ENCODE measurements at regions of chr16 and their contacts with region 1.

Region 1: GRCh38 chr16:31142109-31143010 is 6.8 kb upstream of the PRSS8 start:
- DNase-seq: peak; percentile 95 to 100
- H3K4me3 ChIP-seq: peak overlapping the region; percentile 52
- H3K27ac ChIP-seq: peak overlapping the region; percentile 69
- H3K4me1 ChIP-seq: peaks cover 39% of the 10 kb centered on the region
- H3K27me3 ChIP-seq: no peaks in the 10 kb centered on the region
- CTCF ChIP-seq: peak; percentile 93

Region 2: DNA sequence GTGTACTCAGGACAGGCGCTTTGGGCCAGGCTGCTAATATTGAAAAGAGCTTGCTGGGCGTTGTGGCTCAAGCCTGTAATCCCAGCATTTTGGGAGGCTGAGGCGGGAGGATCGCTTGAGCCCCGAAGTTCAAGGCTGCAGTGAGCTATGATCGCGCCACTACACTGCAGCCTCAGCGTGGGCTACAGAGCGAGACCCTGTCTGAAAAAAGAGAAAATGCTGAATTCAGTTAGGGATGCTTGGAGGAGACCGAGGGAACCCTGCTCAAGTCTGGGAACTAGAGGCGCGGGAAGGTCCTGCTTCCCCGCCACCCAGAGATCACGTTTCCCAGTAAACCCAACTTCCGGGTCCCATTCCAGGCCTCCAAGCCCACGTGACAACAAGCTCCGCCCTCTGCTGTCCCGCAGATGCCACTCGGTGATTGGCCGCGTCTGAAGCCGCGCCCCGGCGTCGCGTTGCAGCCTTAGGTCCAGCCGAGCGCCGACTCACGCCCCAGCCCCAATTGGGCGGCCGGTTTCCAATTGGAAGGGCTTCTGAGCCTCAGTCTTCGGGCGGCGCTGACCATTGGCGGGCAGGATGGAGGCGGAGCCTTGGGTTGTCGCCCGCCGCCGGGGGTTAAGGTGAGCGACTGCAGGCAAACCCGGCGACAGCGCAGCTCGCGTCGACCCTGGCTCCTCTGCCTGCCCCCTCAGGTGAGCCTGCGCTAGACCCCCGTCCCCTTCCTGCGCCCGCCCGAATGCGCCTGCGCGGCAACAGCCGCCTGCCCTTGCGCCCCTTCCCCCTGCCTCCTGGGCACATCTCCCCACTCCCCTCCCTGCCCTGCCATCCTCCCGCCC is 394.3 kb before region 1 on chr16 and contains the start of gene PHKG2:
- CTCF ChIA-PET with region 1: no interaction called
- POLR2A ChIA-PET with region 1: no interaction called
- intact Hi-C with region 1: no loop called
- DNase-seq: peak; percentile 98 to 100
- H3K4me3 ChIP-seq: peak within 1 kb of the TSS; percentile 75
- H3K27ac ChIP-seq: peak within 1 kb of the TSS; percentile 53
- H3K4me1 ChIP-seq: peaks cover 13% of the 10 kb centered on the region
- H3K27me3 ChIP-seq: no peaks in the 10 kb centered on the region
- CTCF ChIP-seq: no peak
- total RNA-seq, gene PHKG2: 66.1 and 67.3 TPM in 2 replicates

Region 3: GRCh38 chr16:30957456-30958174 is 184.7 kb before region 1 on chr16 and contains the start of gene SETD1A:
- CTCF ChIA-PET with region 1: interaction called, 3 read pairs
- POLR2A ChIA-PET with region 1: interaction called, 16 read pairs
- intact Hi-C with region 1: no loop called
- DNase-seq: peak; percentile 86 to 96
- H3K4me3 ChIP-seq: peak within 1 kb of the TSS; percentile 97
- H3K27ac ChIP-seq: peak within 1 kb of the TSS; percentile 82
- H3K4me1 ChIP-seq: peaks cover 9% of the 10 kb centered on the region
- H3K27me3 ChIP-seq: no peaks in the 10 kb centered on the region
- CTCF ChIP-seq: no peak
- total RNA-seq, gene SETD1A: 29.6 and 33.2 TPM in 2 replicates

Region 4: DNA sequence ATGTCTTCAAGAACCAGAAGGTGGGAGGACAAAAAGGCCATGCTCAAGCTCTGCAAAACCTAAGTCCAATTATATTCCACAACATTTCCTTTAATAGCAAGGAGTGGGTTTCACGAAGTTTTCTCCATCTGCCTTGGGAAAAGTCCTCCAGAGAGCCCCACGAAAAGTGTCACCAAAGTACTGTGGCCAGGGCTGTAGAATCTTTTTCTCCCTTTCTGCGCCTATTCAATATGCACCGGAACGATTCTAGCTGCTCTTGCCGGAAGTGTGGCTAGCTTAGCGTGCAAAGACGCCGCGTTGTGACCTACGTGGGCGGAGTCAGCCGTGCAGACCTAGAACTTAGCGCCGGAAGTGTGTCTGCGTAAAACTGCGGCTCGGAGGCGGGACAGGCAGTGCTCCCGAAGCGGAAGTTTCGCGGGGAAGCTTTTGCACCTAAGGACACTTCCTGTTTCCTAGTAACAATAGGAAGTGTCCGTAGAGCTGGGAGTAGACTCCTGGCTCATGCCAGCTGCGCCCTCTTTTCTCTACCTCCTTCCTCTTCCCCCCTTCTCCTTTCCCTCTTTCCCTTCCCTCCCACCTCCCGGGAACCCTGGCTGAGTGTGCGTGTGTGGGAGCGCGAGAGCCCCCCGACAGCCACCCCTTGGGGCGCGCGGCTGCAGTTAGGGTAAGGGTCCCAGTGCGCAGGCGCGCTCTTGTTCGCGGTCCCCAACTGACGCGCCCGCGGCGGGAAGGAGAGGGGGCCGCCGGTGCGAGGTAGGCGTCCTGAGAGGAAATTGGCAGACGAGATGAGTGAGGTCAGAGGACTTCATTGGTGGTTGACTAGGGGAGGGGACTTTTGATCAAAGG is 68.2 kb before region 1 on chr16 and contains the starts of genes ZNF646 and ZNF668:
- CTCF ChIA-PET with region 1: interaction called, 16 read pairs
- POLR2A ChIA-PET with region 1: interaction called, 3 read pairs
- intact Hi-C with region 1: loop called (anchors 1 kb)
- DNase-seq: peak; percentile 98 to 99
- H3K4me3 ChIP-seq: peak within 1 kb of the TSS; percentile 89
- H3K27ac ChIP-seq: peak within 1 kb of the TSS; percentile 62
- H3K4me1 ChIP-seq: peaks cover 20% of the 10 kb centered on the region
- H3K27me3 ChIP-seq: no peaks in the 10 kb centered on the region
- CTCF ChIP-seq: no peak
- total RNA-seq, gene ZNF646: 25.4 and 30.7 TPM in 2 replicates
- total RNA-seq, gene ZNF668: 13.2 and 17.4 TPM in 2 replicates

Region 5: GRCh38 chr16:31117391-31118197 is 24.8 kb before region 1 on chr16 and contains the start of gene KAT8:
- CTCF ChIA-PET with region 1: interaction called, 49 read pairs
- POLR2A ChIA-PET with region 1: interaction called, 108 read pairs
- intact Hi-C with region 1: loop called (anchors 1 kb)
- DNase-seq: peak; percentile 98 to 100
- H3K4me3 ChIP-seq: peak within 1 kb of the TSS; percentile 74
- H3K27ac ChIP-seq: peak within 1 kb of the TSS; percentile 91
- H3K4me1 ChIP-seq: peaks cover 16% of the 10 kb centered on the region
- H3K27me3 ChIP-seq: no peaks in the 10 kb centered on the region
- CTCF ChIP-seq: no peak
- total RNA-seq, gene KAT8: 81.4 and 84.3 TPM in 2 replicates

Region 6: GRCh38 chr16:31202414-31203375 is 60.3 kb after region 1 on chr16 and contains the start of gene PYCARD:
- CTCF ChIA-PET with region 1: no interaction called
- POLR2A ChIA-PET with region 1: interaction called, 11 read pairs
- intact Hi-C with region 1: no loop called
- DNase-seq: peak in 1 of 2 experiments; percentile 65
- H3K4me3 ChIP-seq: peak within 1 kb of the TSS; percentile 47
- H3K27ac ChIP-seq: no peak within 1 kb of the TSS
- H3K4me1 ChIP-seq: peaks cover 19% of the 10 kb centered on the region
- H3K27me3 ChIP-seq: no peaks in the 10 kb centered on the region
- CTCF ChIP-seq: no peak
- total RNA-seq, gene PYCARD: 72.9 and 107 TPM in 2 replicates

Region 7: GRCh38 chr16:31458844-31459721 is 316.7 kb after region 1 on chr16 and contains the start of gene ARMC5:
- CTCF ChIA-PET with region 1: interaction called, 5 read pairs
- POLR2A ChIA-PET with region 1: interaction called, 9 read pairs
- intact Hi-C with region 1: loop called (anchors 2 kb)
- DNase-seq: peak; percentile 96 to 99
- H3K4me3 ChIP-seq: peak within 1 kb of the TSS; percentile 80
- H3K27ac ChIP-seq: peak within 1 kb of the TSS; percentile 95
- H3K4me1 ChIP-seq: peaks cover 41% of the 10 kb centered on the region
- H3K27me3 ChIP-seq: no peaks in the 10 kb centered on the region
- CTCF ChIP-seq: peak; percentile 66
- total RNA-seq, gene ARMC5: 18.6 and 21.4 TPM in 2 replicates

Measured in PC-9 (cell line).